ENCODE measurements at regions of chr6 and their contacts with region 1.

Region 1: DNA sequence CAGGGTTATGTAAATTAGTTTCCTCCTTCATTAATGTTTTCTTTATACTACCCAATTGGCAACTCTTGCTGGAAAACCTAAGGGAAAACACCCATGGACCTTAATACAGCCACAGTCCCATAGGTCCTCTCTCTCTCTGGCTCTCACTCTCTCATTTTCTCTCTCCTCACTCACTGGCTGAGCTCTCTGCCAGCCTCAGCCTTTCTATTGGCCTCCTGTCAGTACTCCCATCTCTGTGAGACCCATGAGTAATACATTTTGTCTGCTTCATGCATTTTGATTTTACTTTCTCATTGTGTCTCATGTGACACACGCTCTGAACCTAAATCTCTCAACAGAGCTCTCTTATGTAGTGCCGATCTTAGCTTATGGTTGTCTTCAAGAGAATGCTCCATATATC is 907.5 kb downstream of the C6orf118 start:
- DNase-seq: no peak
- ATAC-seq: no peak

Region 2: GRCh38 chr6:163965426-163966348 is 436.2 kb before region 1 on chr6:
- intact Hi-C with region 1: loop called (anchors 10 kb)
- DNase-seq: no peak
- ATAC-seq: no peak

Region 3: DNA sequence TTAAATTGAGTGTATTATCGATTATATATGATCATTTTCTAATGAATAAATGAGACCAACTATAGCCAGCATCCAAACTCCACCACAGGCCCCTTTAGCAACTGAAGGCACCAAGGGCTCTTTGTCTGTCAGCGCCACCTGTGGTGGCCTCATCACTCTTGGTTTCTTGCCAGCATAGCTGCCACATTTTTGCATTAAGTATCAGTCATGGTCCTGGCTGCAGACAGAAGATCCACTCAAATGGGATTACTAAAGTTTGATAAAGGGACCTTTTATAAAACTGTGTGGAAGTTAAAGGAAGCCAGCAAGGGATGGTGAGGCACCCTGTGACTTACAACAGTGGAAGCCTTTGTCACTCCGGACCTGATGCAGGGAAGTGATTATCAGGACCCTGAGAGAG is 744.6 kb after region 1 on chr6:
- intact Hi-C with region 1: no loop called
- DNase-seq: no peak
- ATAC-seq: no peak